Activated CD4-positive, alpha-beta T cell treated with anti-CD3 and anti-CD28 coated beads for 36 hours (primary cell): ENCODE measurements at regions of chr12 and their contacts with region 1.

Region 1: GRCh38 chr12:4506870-4507269 is 31.8 kb upstream of the RAD51AP1 start:
- DNase-seq: peak; percentile 21
- ATAC-seq: peak; percentile 99
- H3K4me3 Mint-ChIP-seq: peak overlapping the region; percentile 41
- H3K27ac Mint-ChIP-seq: peak overlapping the region; percentile 69
- H3K4me1 Mint-ChIP-seq: peaks cover 29% of the 10 kb centered on the region
- H3K27me3 Mint-ChIP-seq: no peaks in the 10 kb centered on the region

Region 2: GRCh38 chr12:3752741-3753486 is 754.0 kb before region 1 on chr12 and contains the start of gene CRACR2A:
- CTCF ChIA-PET with region 1: no interaction called
- POLR2A ChIA-PET with region 1: no interaction called
- intact Hi-C with region 1: loop called in 1 of 2 experiments (anchors 10 kb)
- DNase-seq: peak; percentile 92
- ATAC-seq: peak; percentile 84
- H3K4me3 Mint-ChIP-seq: peak within 1 kb of the TSS; percentile 86
- H3K27ac Mint-ChIP-seq: peak within 1 kb of the TSS; percentile 96
- H3K4me1 Mint-ChIP-seq: peaks cover 52% of the 10 kb centered on the region
- H3K27me3 Mint-ChIP-seq: no peaks in the 10 kb centered on the region
- total RNA-seq, gene CRACR2A: 19.2 to 22.5 TPM

Region 3: DNA sequence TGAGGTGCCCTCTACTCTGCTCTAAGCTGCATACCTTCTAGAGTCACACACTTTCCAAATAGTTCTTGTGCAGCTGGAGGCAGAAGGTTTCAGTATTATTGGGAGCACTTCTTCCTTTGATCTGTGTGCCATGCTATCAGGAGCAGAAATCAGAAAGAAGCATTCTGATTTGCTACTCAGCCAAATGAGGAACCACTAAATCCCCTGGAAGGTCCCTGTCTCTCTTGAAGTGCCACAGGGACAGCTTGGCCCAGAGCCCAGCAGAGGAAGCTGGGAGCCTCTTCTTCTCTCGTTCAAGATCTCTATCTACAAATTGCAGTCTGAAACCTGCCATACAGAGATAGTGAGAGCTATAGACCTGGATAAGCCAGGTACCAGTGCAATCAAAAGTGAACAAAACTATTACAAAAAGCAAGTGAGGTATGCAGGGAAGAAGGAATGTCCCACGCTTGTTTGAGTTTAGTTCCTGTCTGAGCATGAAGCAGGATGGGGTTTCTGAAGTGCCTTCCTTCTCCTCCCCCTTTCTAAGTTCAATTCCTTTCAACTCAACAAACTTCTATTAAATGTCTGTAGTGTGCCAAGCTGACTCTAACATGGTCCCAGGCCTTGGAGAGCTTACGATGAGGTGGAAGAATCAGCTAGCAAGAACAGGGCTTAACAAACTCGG is 532.8 kb before region 1 on chr12:
- CTCF ChIA-PET with region 1: no interaction called
- POLR2A ChIA-PET with region 1: interaction called, 4 read pairs
- intact Hi-C with region 1: loop called in 1 of 2 experiments (anchors 10 kb)
- DNase-seq: peak; percentile 40
- ATAC-seq: peak; percentile 69
- H3K4me3 Mint-ChIP-seq: peak overlapping the region; percentile 25
- H3K27ac Mint-ChIP-seq: peak overlapping the region; percentile 76
- H3K4me1 Mint-ChIP-seq: peaks cover 66% of the 10 kb centered on the region
- H3K27me3 Mint-ChIP-seq: no peaks in the 10 kb centered on the region

Region 4: GRCh38 chr12:4178424-4179170 is 328.3 kb before region 1 on chr12:
- CTCF ChIA-PET with region 1: no interaction called
- POLR2A ChIA-PET with region 1: no interaction called
- intact Hi-C with region 1: loop called in 1 of 2 experiments (anchors 1 kb)
- DNase-seq: peak; percentile 52
- ATAC-seq: peak; percentile 98
- H3K4me3 Mint-ChIP-seq: peak overlapping the region; percentile 4
- H3K27ac Mint-ChIP-seq: peak overlapping the region; percentile 66
- H3K4me1 Mint-ChIP-seq: peaks cover 21% of the 10 kb centered on the region
- H3K27me3 Mint-ChIP-seq: no peaks in the 10 kb centered on the region

Region 5: DNA sequence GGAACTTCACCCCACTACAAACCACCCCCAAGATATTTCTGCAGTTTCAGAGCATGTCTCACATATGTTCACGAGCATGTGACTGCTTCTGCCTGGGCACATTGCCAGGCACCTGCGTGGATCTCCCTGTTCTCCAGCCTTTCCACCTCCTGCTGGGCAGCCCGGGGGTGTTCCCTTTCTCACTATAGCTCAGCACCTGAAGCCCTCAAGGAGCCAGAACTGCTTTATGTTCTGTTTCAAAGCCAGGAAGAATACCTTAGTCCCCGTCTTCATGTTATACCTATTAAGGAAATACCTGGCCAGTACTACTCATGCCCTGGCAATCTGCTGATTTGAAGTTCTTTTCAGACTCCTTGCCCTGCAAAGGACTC is 57.0 kb before region 1 on chr12:
- CTCF ChIA-PET with region 1: no interaction called
- POLR2A ChIA-PET with region 1: no interaction called
- intact Hi-C with region 1: loop called in 1 of 2 experiments (anchors 5 kb)
- DNase-seq: no peak
- ATAC-seq: no peak
- H3K4me3 Mint-ChIP-seq: no peak overlapping the region
- H3K27ac Mint-ChIP-seq: no peak overlapping the region
- H3K4me1 Mint-ChIP-seq: peaks cover 11% of the 10 kb centered on the region
- H3K27me3 Mint-ChIP-seq: peaks cover 11% of the 10 kb centered on the region

Region 6: DNA sequence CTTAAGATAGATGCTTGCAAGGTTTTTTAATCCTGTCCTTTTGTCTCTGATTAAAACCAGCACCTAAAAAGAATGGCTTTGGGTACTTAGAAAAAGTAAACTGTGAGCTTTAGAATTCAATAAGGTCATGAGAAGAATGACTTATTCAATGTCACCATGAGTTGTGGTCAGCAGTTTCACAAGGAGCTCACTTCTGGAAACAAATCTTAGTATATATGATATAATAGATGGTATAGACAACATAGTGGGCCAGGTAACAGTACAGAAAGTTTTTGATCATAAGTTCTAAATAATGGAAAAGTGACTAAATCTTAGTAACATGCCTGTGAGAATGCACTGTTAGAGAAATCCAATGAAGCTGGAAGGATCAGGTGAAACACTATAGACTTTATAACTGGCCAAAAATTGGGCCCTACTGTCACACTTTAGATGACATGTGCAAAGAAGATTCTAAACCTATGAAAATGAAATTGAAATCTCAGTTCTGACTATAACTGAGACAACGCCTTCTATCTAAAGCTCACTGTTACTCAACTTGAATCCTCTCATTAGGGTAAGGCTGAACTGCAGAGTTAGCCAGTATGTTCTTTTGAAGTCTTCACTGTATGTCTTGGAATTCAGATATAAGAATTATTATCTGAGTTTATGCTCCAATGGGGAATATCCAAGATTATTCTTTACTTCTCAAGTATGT is 10.6 kb before region 1 on chr12:
- CTCF ChIA-PET with region 1: interaction called, 16 read pairs
- POLR2A ChIA-PET with region 1: no interaction called
- intact Hi-C with region 1: loop called in 1 of 2 experiments (anchors 1 kb)
- DNase-seq: no peak
- ATAC-seq: peak; percentile 98
- H3K4me3 Mint-ChIP-seq: no peak overlapping the region
- H3K27ac Mint-ChIP-seq: peak overlapping the region; percentile 80
- H3K4me1 Mint-ChIP-seq: peaks cover 19% of the 10 kb centered on the region
- H3K27me3 Mint-ChIP-seq: no peaks in the 10 kb centered on the region

Region 7: GRCh38 chr12:5022465-5023061 is 515.7 kb after region 1 on chr12:
- CTCF ChIA-PET with region 1: no interaction called
- POLR2A ChIA-PET with region 1: no interaction called
- intact Hi-C with region 1: no loop called
- DNase-seq: peak; percentile 67
- ATAC-seq: peak; percentile 63
- H3K4me3 Mint-ChIP-seq: no peak overlapping the region
- H3K27ac Mint-ChIP-seq: no peak overlapping the region
- H3K4me1 Mint-ChIP-seq: no peaks in the 10 kb centered on the region
- H3K27me3 Mint-ChIP-seq: peaks cover 16% of the 10 kb centered on the region